WTC11 (cell line): ENCODE measurements at regions of chr2 and their contacts with region 1.

Region 1: DNA sequence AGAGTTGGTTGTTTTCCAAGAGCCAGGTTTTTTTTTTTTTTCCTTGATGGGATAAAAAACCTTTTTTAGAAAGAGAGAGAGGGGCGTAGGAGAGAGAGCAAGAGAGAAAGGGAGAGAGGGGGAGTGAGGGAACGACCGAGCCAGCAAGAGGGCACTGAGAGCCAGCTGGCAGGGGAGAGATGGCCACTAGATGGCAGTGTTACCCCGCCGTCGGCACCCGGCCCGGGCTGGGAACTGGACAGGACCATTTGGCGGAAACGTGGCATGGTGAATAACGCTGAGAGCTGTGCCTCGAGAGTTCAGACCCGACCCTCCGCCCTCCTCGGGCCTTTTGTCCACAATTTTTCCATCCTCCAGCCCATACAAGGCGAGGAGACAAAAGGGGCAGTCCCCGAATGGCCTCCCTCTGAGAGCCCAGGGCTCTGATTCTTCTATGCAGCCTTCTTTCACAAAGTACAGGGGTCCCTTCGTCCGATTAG is 286.7 kb upstream of the VRK2 start:
- DNase-seq: peak; percentile 94
- ATAC-seq: peak; percentile 94
- H3K4me3 Mint-ChIP-seq: peak overlapping the region; percentile 53
- H3K27ac Mint-ChIP-seq: no peak overlapping the region
- H3K4me1 Mint-ChIP-seq: peaks cover 39% of the 10 kb centered on the region
- H3K27me3 Mint-ChIP-seq: peaks cover 2% of the 10 kb centered on the region; the same call in 1 of the 2 replicates
- CTCF ChIP-seq: peak; percentile 92

Region 2: GRCh38 chr2:57141269-57141668 is 618.6 kb before region 1 on chr2:
- CTCF ChIA-PET with region 1: no interaction called
- POLR2A ChIA-PET with region 1: no interaction called
- DNase-seq: no peak
- ATAC-seq: no peak
- H3K4me3 Mint-ChIP-seq: no peak overlapping the region
- H3K27ac Mint-ChIP-seq: no peak overlapping the region
- H3K4me1 Mint-ChIP-seq: no peaks in the 10 kb centered on the region; the same call in 1 of the 2 replicates
- H3K27me3 Mint-ChIP-seq: no peaks in the 10 kb centered on the region; the same call in 1 of the 2 replicates
- CTCF ChIP-seq: no peak

Region 3: DNA sequence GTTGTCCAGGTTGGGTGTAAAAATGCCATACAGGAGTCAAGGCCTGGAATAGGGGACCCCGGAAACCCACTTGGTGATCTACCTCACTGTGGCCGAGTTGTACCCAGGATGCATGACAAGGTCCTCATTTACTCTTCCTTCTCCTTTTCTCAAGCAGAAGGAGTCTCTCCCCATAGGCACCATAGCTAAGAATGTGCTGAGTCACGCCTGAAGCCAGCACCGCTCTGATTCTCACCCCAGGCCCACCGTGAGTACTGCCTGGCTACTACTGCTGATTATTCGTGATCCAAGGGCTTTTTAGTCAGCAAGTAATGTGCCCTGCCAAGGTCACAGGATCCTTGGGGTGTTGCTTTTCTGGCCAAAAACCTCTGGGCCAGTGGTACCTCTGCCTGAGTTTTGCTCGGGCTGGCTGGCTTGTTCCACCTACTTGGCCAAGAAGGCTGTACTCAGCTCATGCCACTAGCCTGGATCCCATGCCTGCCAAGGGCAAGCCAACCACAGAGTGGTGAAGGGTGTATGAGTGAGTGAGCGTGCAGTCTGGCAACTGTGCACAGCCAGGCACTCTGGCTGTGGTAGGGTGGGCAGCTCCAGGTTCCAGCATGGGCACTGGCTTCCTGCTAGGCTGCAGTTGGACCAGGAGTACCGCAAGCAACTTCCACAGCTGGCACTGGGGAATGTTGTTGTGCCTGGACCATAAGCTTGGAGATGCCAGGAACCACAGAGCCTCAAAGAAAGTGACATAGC is 363.3 kb before region 1 on chr2:
- CTCF ChIA-PET with region 1: no interaction called
- POLR2A ChIA-PET with region 1: no interaction called
- DNase-seq: no peak
- ATAC-seq: peak; percentile 76
- H3K4me3 Mint-ChIP-seq: no peak overlapping the region
- H3K27ac Mint-ChIP-seq: no peak overlapping the region
- H3K4me1 Mint-ChIP-seq: peaks cover 6% of the 10 kb centered on the region; the same call in 1 of the 2 replicates
- H3K27me3 Mint-ChIP-seq: no peaks in the 10 kb centered on the region
- CTCF ChIP-seq: no peak

Region 4: GRCh38 chr2:57720728-57721627 is 38.9 kb before region 1 on chr2:
- CTCF ChIA-PET with region 1: interaction called, 10 read pairs
- POLR2A ChIA-PET with region 1: no interaction called
- DNase-seq: peak; percentile 62
- ATAC-seq: peak; percentile 100
- H3K4me3 Mint-ChIP-seq: peak overlapping the region; percentile 49
- H3K27ac Mint-ChIP-seq: no peak overlapping the region
- H3K4me1 Mint-ChIP-seq: peaks cover 18% of the 10 kb centered on the region
- H3K27me3 Mint-ChIP-seq: no peaks in the 10 kb centered on the region
- CTCF ChIP-seq: peak; percentile 83